Activated B cell treated with CpG ODN at 0.5 μM for 24 hours (primary cell): ENCODE measurements at regions of chr10 and their contacts with region 1.

Region 1: GRCh38 chr10:112375721-112376395 is 1.9 kb downstream of the ACSL5 start:
- DNase-seq: peak; percentile 47
- ATAC-seq: peak; percentile 85
- H3K4me3 Mint-ChIP-seq: peak overlapping the region; percentile 100
- H3K27ac Mint-ChIP-seq: peak overlapping the region; percentile 99
- H3K4me1 Mint-ChIP-seq: peaks cover 61% of the 10 kb centered on the region
- H3K27me3 Mint-ChIP-seq: no peaks in the 10 kb centered on the region
- CTCF ChIP-seq: no peak

Region 2: DNA sequence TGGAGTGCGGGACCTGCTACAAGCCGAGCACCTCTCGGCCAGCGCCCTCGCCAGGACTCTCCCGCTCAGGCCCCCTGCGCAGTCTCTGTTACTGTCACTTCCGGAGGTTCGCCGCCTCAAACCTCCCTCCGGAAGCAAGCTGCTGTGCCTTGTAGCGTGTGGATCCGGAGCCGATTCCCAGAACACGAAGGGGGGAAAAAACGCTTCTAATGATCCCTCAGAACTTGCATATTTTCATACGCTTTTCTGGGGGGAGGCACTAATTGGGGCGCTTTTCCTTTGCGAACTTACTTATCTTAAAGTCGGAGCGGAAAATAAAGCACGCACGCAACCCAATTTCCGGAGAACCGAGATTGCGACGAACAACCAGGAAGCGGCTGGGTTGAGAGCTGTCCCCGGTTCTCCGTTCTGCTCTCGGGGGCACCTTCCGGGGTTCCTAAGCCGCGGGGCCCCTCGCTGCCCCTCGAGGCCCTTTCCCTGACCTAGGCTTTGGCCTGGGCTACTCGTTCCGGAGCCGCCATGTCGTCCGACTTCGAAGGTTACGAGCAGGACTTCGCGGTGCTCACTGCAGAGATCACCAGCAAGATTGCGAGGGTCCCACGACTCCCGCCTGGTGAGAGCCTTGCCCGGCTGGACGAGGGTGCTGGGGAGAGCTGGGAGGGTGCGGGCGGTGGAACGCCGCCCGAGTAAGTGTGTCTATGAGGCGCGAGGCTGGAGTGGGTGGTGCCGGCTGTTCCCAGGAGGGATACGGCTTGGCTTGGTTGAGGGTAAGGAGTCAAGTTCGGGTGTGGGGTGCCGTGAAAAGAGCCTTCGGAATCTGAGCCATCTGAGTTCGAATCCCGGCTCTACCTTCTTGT is 71.2 kb after region 1 on chr10 and contains the starts of genes VTI1A and ZDHHC6:
- CTCF ChIA-PET with region 1: no interaction called
- POLR2A ChIA-PET with region 1: interaction called, 21 read pairs
- intact Hi-C with region 1: loop called (anchors 1 kb)
- DNase-seq: peak; percentile 81
- ATAC-seq: peak; percentile 88
- H3K4me3 Mint-ChIP-seq: peak within 1 kb of the TSS; percentile 89
- H3K27ac Mint-ChIP-seq: peak within 1 kb of the TSS; percentile 90
- H3K4me1 Mint-ChIP-seq: peaks cover 44% of the 10 kb centered on the region
- H3K27me3 Mint-ChIP-seq: no peaks in the 10 kb centered on the region
- CTCF ChIP-seq: no peak
- total RNA-seq, gene VTI1A: 56.9 and 74.0 TPM in 2 replicates
- total RNA-seq, gene ZDHHC6: 37.1 and 44.5 TPM in 2 replicates

Region 3: GRCh38 chr10:112532189-112532588 is 156.3 kb after region 1 on chr10:
- CTCF ChIA-PET with region 1: no interaction called
- POLR2A ChIA-PET with region 1: no interaction called
- intact Hi-C with region 1: loop called (anchors 10 kb)
- DNase-seq: no peak
- ATAC-seq: peak; percentile 71
- H3K4me3 Mint-ChIP-seq: peak overlapping the region; percentile 76
- H3K27ac Mint-ChIP-seq: peak overlapping the region; percentile 3
- H3K4me1 Mint-ChIP-seq: peaks cover 28% of the 10 kb centered on the region
- H3K27me3 Mint-ChIP-seq: no peaks in the 10 kb centered on the region
- CTCF ChIP-seq: no peak